Colonic mucosa (tissue), 4 donors: ENCODE measurements at regions of chr3 and their contacts with region 1.

Region 1: GRCh38 chr3:52144034-52144795 is 10.0 kb downstream of the POC1A start:
- DNase-seq: peak; percentile 85
- H3K4me3 ChIP-seq: no peak overlapping the region
- H3K27ac ChIP-seq: no peak overlapping the region
- H3K4me1 ChIP-seq: no peaks in the 10 kb centered on the region
- H3K27me3 ChIP-seq: no peaks in the 10 kb centered on the region
- CTCF ChIP-seq: peak; percentile 91

Region 2: DNA sequence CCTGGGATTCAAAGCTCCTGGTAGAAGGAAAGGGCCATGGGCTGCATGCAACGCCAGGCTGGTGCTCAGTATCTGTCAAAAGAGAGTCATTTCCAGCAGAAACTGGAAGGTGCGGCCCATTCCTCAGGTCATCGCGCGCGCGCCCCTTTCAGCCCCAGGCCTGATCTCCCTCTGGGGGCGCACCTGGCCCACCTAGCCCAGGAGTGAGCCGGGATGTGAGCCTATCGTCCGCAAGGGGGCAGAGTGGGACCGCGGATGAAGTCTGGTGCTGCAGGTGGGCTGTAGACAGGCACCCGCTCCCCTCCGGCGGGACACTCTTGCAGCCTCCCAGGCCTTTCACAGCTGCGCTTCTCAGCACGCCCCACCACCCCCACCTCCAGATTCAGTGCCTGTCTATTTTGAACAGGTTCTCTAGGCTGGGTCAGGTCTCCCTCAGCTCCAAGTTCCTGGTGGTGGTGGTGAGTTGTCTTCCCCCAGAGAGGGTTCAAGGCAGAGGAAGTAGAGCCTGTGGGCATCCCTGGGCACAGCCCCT is 142.7 kb before region 1 on chr3:
- intact Hi-C with region 1: loop called (anchors 5 kb)
- DNase-seq: peak; percentile 79
- H3K4me3 ChIP-seq: no peak overlapping the region
- H3K27ac ChIP-seq: no peak overlapping the region
- H3K4me1 ChIP-seq: no peaks in the 10 kb centered on the region
- H3K27me3 ChIP-seq: no peaks in the 10 kb centered on the region
- CTCF ChIP-seq: peak; percentile 84

Region 3: DNA sequence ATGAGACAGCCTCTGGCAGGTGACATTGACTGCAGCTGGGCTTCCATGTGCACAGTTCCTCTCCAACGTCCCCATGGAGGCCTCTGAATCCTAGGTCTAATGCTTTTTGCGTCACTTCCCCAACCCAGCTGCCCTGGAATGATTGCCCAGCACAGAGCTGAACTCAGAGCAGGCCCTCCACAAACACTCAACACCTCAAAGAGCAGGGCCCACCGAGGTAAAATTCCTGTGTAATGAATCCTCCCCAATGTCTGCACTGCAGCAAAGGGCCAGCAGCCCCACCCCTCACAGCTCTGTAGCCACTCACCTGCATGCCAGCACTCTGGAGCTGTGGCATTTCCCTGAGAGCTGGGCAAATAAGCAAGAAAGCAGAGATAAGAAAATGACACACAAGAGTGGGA is 45.2 kb before region 1 on chr3:
- intact Hi-C with region 1: no loop called
- DNase-seq: no peak
- H3K4me3 ChIP-seq: no peak overlapping the region
- H3K27ac ChIP-seq: no peak overlapping the region
- H3K4me1 ChIP-seq: no peaks in the 10 kb centered on the region
- H3K27me3 ChIP-seq: no peaks in the 10 kb centered on the region
- CTCF ChIP-seq: no peak